Testis (tissue), 5 donors: ENCODE measurements at regions of chr7 and their contacts with region 1.

Region 1: GRCh38 chr7:80428161-80429054 is 83.5 kb downstream of the GNAT3 start:
- DNase-seq: peak; percentile 28
- H3K4me3 ChIP-seq: no peak overlapping the region
- H3K27ac ChIP-seq: no peak overlapping the region
- H3K4me1 ChIP-seq: no peaks in the 10 kb centered on the region
- H3K27me3 ChIP-seq: no peaks in the 10 kb centered on the region
- CTCF ChIP-seq: peak; percentile 37 to 54 (median 44)
- POLR2A ChIP-seq: no peak

Region 2: GRCh38 chr7:80488406-80488805 is 60.0 kb after region 1 on chr7:
- intact Hi-C with region 1: no loop called
- DNase-seq: no peak
- H3K4me3 ChIP-seq: no peak overlapping the region
- H3K27ac ChIP-seq: no peak overlapping the region
- H3K4me1 ChIP-seq: no peaks in the 10 kb centered on the region
- H3K27me3 ChIP-seq: no peaks in the 10 kb centered on the region
- CTCF ChIP-seq: no peak
- POLR2A ChIP-seq: no peak

Region 3: DNA sequence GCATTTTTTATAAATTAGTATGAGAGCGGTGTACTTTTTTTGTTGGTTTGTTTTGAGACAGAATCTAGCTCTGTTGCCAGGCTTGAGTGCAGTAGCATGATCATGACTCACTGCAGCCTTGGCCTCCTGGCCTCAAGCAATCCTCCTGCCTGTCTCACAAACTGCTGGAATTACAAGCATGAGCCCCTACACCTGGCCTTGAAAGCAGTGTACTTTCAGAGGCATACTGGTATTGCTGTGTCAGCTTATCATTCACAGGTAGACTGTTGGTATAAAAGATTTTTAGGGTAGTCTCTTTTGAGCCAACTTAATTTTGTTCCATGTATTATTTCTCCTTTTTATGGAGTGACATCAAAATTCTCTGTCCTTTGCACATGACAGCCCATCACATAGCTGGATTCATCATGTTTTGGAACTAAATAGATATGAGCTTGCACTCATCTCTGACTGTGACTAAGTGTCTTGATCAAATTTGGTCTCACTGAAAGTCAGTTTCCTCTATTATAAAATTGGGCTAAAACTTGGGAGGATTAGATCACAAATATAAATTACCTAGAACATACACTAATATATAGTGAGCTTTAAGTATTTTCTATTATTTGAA is 71.0 kb after region 1 on chr7:
- intact Hi-C with region 1: no loop called
- DNase-seq: peak; percentile 37
- H3K4me3 ChIP-seq: no peak overlapping the region
- H3K27ac ChIP-seq: no peak overlapping the region
- H3K4me1 ChIP-seq: no peaks in the 10 kb centered on the region
- H3K27me3 ChIP-seq: no peaks in the 10 kb centered on the region
- CTCF ChIP-seq: no peak
- POLR2A ChIP-seq: no peak

Region 4: GRCh38 chr7:80659120-80660055 is 231.0 kb after region 1 on chr7:
- intact Hi-C with region 1: loop called (anchors 10 kb)
- DNase-seq: no peak
- H3K4me3 ChIP-seq: no peak overlapping the region
- H3K27ac ChIP-seq: no peak overlapping the region
- H3K4me1 ChIP-seq: no peaks in the 10 kb centered on the region
- H3K27me3 ChIP-seq: no peaks in the 10 kb centered on the region
- CTCF ChIP-seq: peak; percentile 54 to 87 (median 61)
- POLR2A ChIP-seq: no peak